MCF 10A (cell line): ENCODE measurements at regions of chr14 and their contacts with region 1.

Region 1: DNA sequence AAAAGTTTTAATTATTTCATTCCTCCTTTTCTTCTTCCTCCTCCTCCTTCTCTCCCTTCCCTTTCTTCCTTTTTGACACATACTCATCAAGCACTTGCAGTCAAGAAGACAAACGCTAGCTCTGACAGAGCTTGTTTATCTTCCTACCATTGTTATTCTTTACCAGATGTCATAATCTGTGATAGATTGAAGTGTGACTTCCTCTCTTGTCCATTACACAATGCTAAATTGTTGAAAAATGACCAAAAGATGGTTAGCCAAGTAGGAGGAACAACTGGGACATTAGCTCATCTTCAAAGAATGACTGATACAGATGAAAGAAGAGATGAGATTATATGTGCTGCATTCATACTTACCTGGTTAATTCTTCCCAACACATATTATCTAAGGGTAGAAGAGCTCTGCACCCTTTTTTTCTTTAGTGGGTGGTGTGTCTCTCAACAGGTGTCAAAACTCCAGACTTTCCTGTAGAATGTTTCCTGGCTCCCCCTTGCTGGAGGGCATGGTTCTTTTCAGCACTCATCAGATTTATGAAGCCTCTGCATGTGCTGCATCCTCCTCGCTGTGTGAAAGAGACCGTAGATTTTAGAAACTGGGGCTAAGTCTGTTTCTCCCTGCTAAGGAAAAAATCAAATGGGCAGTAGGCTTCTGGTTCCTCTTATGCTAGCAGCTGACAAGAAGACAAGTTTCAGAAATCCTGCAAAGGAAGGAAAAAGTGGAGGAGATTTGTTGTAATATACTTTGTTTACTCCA is 147.1 kb downstream of the TMX1 start:
- DNase-seq: peak; percentile 50
- H3K4me3 Mint-ChIP-seq: no peak overlapping the region
- H3K27ac Mint-ChIP-seq: peak overlapping the region; percentile 1
- H3K4me1 Mint-ChIP-seq: peaks cover 23% of the 10 kb centered on the region
- H3K27me3 Mint-ChIP-seq: no peaks in the 10 kb centered on the region
- CTCF ChIP-seq: no peak

Region 2: GRCh38 chr14:51251458-51251857 is 135.7 kb before region 1 on chr14:
- CTCF ChIA-PET with region 1: no interaction called
- POLR2A ChIA-PET with region 1: no interaction called
- intact Hi-C with region 1: no loop called
- DNase-seq: peak; percentile 18
- H3K4me3 Mint-ChIP-seq: no peak overlapping the region
- H3K27ac Mint-ChIP-seq: peak overlapping the region; percentile 58
- H3K4me1 Mint-ChIP-seq: peaks cover 7% of the 10 kb centered on the region
- H3K27me3 Mint-ChIP-seq: no peaks in the 10 kb centered on the region
- CTCF ChIP-seq: no peak

Region 3: DNA sequence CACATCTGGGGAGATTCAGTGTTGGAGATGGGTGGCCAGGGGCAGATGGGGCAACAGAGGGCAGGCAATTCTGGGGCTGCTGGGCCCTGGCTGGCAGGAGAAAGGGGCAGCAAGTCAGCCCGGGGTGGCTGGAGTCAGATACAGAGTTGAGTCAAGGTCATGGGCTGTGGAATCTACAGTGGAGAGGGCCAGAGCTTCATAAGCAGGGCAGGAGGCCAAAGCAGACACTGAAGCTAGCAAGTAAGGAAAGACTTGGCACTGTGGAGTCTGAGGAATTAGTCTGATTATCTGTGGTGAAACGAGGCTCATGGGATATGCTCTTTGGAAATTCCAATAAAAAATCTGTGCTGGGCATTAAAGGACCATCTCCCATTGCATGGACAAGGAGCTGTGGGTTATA is 51.6 kb before region 1 on chr14:
- CTCF ChIA-PET with region 1: no interaction called
- POLR2A ChIA-PET with region 1: interaction called, 10 read pairs
- intact Hi-C with region 1: no loop called
- DNase-seq: no peak
- H3K4me3 Mint-ChIP-seq: no peak overlapping the region
- H3K27ac Mint-ChIP-seq: peak overlapping the region; percentile 84
- H3K4me1 Mint-ChIP-seq: peaks cover 51% of the 10 kb centered on the region
- H3K27me3 Mint-ChIP-seq: no peaks in the 10 kb centered on the region
- CTCF ChIP-seq: no peak

Region 4: GRCh38 chr14:51369814-51370213 is 17.3 kb before region 1 on chr14:
- CTCF ChIA-PET with region 1: no interaction called
- POLR2A ChIA-PET with region 1: interaction called, 10 read pairs
- intact Hi-C with region 1: no loop called
- DNase-seq: peak; percentile 55
- H3K4me3 Mint-ChIP-seq: no peak overlapping the region
- H3K27ac Mint-ChIP-seq: no peak overlapping the region
- H3K4me1 Mint-ChIP-seq: peaks cover 20% of the 10 kb centered on the region
- H3K27me3 Mint-ChIP-seq: no peaks in the 10 kb centered on the region
- CTCF ChIP-seq: peak; percentile 47